Activated CD4-positive, alpha-beta memory T cell treated with anti-CD3 and anti-CD28 coated beads for 36 hours (primary cell): ENCODE measurements at regions of chr14 and their contacts with region 1.

Region 1: GRCh38 chr14:60648934-60649874 is at the start of gene SIX1:
- DNase-seq: peak; percentile 45
- H3K4me3 Mint-ChIP-seq: peak within 1 kb of the TSS; percentile 32
- H3K27ac Mint-ChIP-seq: no peak within 1 kb of the TSS
- H3K4me1 Mint-ChIP-seq: peaks cover 58% of the 10 kb centered on the region
- H3K27me3 Mint-ChIP-seq: peaks cover 86% of the 10 kb centered on the region
- total RNA-seq, gene SIX1: not detected

Region 2: GRCh38 chr14:60509438-60510253 is 139.6 kb before region 1 on chr14:
- CTCF ChIA-PET with region 1: no interaction called
- POLR2A ChIA-PET with region 1: no interaction called
- intact Hi-C with region 1: loop called (anchors 2 kb)
- DNase-seq: peak; percentile 9
- H3K4me3 Mint-ChIP-seq: no peak overlapping the region
- H3K27ac Mint-ChIP-seq: no peak overlapping the region
- H3K4me1 Mint-ChIP-seq: peaks cover 27% of the 10 kb centered on the region
- H3K27me3 Mint-ChIP-seq: peaks cover 73% of the 10 kb centered on the region

Region 3: DNA sequence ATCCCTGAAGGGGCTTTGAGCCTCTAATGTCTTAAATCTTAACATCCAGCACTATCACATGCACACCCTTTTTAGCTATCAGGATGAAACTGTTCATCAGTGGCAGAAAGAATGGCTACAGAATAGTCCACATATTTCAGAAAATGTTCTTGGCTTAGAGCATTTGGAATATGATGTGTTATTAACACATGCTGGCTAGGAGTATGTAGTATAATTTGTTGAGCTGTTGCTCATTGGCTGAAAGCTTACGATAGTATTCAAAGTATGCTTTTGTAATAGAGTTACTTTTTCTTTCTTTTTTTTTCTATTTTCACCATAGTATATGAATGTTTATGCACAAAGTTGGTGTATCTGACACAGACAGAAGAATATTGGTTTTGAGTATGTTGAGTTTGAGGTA is 140.5 kb after region 1 on chr14:
- CTCF ChIA-PET with region 1: no interaction called
- POLR2A ChIA-PET with region 1: no interaction called
- intact Hi-C with region 1: no loop called
- DNase-seq: no peak
- H3K4me3 Mint-ChIP-seq: no peak overlapping the region
- H3K27ac Mint-ChIP-seq: no peak overlapping the region
- H3K4me1 Mint-ChIP-seq: no peaks in the 10 kb centered on the region
- H3K27me3 Mint-ChIP-seq: no peaks in the 10 kb centered on the region

Region 4: GRCh38 chr14:61188978-61189808 is 540.0 kb after region 1 on chr14:
- CTCF ChIA-PET with region 1: no interaction called
- POLR2A ChIA-PET with region 1: no interaction called
- intact Hi-C with region 1: loop called (anchors 5 kb)
- DNase-seq: peak; percentile 69
- H3K4me3 Mint-ChIP-seq: peak overlapping the region; percentile 70
- H3K27ac Mint-ChIP-seq: no peak overlapping the region
- H3K4me1 Mint-ChIP-seq: peaks cover 13% of the 10 kb centered on the region
- H3K27me3 Mint-ChIP-seq: peaks cover 32% of the 10 kb centered on the region